B cell (primary cell): ENCODE measurements at regions of chr5 and their contacts with region 1.

Region 1: DNA sequence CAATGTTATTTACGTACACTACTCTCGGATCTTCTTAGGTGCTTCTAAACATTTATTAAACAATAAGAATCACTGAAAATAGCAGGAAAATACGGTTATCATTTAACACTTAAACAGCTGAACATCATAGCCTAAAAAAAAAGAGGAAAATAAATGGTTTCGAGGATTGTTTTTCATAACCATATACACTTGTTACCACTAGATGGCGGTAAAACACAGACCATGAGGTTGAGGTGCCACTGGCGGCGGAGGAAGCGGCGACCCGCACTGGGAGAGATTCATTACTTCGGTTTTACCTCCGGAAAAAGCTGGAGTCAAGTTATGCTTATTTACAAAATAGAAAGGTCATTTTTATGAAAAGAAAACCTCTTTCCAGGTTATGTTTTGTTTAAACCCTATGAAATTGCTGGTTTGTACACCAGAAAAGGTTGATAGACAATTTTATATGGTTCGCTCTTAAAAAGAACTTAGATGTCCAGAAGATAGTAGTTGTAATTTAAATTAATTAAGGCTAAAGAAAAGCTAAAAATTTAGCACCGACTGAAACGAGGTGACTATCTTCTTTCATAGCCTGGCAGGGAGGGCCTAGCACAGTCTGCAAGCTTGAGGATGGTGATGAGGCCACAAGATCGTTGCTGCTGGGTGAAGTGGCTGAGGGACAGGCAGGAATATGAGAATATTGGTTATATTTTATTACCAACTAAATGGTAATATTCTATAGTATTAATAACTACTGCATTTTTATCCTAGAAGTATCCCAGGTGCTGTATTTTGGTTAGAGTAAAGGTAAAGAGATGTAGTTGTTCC is 605.7 kb downstream of the RAB3C start:
- DNase-seq: peak; percentile 73
- ATAC-seq: peak; percentile 62
- H3K4me3 ChIP-seq: no peak overlapping the region
- H3K4me3 Mint-ChIP-seq: peak overlapping the region; percentile 5
- H3K27ac ChIP-seq: no peak overlapping the region
- H3K27ac Mint-ChIP-seq: no peak overlapping the region
- H3K4me1 ChIP-seq: peaks cover 4 to 6% of the 10 kb centered on the region in 2 donors
- H3K4me1 Mint-ChIP-seq: peaks cover 3% of the 10 kb centered on the region
- H3K27me3 ChIP-seq: no peaks in the 10 kb centered on the region
- H3K27me3 Mint-ChIP-seq: peaks cover 10% of the 10 kb centered on the region
- CTCF ChIP-seq: peak; percentile 93

Region 2: GRCh38 chr5:59174248-59174844 is 14.3 kb before region 1 on chr5:
- CTCF ChIA-PET with region 1: interaction called, 22 read pairs
- POLR2A ChIA-PET with region 1: no interaction called
- intact Hi-C with region 1: no loop called
- DNase-seq: peak; percentile 33
- ATAC-seq: peak; percentile 56
- H3K4me3 ChIP-seq: no peak overlapping the region
- H3K4me3 Mint-ChIP-seq: no peak overlapping the region
- H3K27ac ChIP-seq: no peak overlapping the region
- H3K27ac Mint-ChIP-seq: no peak overlapping the region
- H3K4me1 ChIP-seq: peaks cover 0 to 5% of the 10 kb centered on the region in 2 donors
- H3K4me1 Mint-ChIP-seq: peaks cover 3% of the 10 kb centered on the region
- H3K27me3 ChIP-seq: no peaks in the 10 kb centered on the region
- H3K27me3 Mint-ChIP-seq: no peaks in the 10 kb centered on the region
- CTCF ChIP-seq: peak; percentile 62

Region 3: DNA sequence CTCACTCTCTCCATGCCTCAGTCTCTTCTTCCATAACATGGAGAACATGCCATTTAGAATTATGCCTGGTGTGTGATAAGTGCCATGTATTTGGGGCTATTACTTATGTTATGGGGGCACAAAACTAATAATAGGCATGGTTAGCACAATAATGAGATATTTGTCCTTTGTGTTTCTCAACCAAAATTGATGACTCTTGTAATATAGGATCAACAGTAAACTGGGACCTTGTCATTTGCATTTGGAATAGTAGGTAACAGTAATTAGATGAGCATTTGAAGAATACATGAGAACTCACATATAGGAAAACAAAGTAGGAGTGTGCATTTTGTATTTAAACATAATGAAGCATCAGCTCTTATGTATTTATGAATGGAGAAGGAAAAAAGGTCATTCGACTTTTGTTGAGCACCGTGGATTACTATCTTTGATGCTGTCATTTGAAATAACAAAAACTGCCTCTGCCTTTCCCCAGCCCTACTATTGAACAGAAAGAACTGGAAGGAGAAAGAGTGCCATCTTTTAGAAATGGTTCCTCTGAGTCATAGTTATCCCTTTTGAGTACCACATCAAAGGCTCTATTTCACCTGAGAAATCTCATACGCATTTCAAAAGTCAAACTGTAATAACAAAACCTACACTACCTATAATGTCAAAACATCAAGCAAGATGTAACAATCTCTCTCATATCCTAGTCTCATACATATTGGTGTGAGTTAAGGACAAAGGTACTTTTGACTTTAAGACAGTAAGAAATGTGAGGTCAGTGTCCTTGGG is 49.7 kb after region 1 on chr5:
- CTCF ChIA-PET with region 1: no interaction called
- POLR2A ChIA-PET with region 1: no interaction called
- intact Hi-C with region 1: no loop called
- DNase-seq: no peak
- ATAC-seq: no peak
- H3K4me3 ChIP-seq: no peak overlapping the region
- H3K4me3 Mint-ChIP-seq: no peak overlapping the region
- H3K27ac ChIP-seq: no peak overlapping the region
- H3K27ac Mint-ChIP-seq: no peak overlapping the region
- H3K4me1 ChIP-seq: no peaks in the 10 kb centered on the region
- H3K4me1 Mint-ChIP-seq: no peaks in the 10 kb centered on the region
- H3K27me3 ChIP-seq: no peaks in the 10 kb centered on the region
- H3K27me3 Mint-ChIP-seq: no peaks in the 10 kb centered on the region
- CTCF ChIP-seq: no peak

Region 4: GRCh38 chr5:59367791-59368394 is 179.3 kb after region 1 on chr5:
- CTCF ChIA-PET with region 1: interaction called, 94 read pairs
- POLR2A ChIA-PET with region 1: no interaction called
- intact Hi-C with region 1: loop called (anchors 1 kb)
- DNase-seq: peak; percentile 34
- ATAC-seq: peak; percentile 36
- H3K4me3 ChIP-seq: no peak overlapping the region
- H3K4me3 Mint-ChIP-seq: no peak overlapping the region
- H3K27ac ChIP-seq: no peak overlapping the region
- H3K27ac Mint-ChIP-seq: no peak overlapping the region
- H3K4me1 ChIP-seq: no peaks in the 10 kb centered on the region
- H3K4me1 Mint-ChIP-seq: no peaks in the 10 kb centered on the region
- H3K27me3 ChIP-seq: no peaks in the 10 kb centered on the region
- H3K27me3 Mint-ChIP-seq: peaks cover 3% of the 10 kb centered on the region
- CTCF ChIP-seq: peak; percentile 59

Region 5: DNA sequence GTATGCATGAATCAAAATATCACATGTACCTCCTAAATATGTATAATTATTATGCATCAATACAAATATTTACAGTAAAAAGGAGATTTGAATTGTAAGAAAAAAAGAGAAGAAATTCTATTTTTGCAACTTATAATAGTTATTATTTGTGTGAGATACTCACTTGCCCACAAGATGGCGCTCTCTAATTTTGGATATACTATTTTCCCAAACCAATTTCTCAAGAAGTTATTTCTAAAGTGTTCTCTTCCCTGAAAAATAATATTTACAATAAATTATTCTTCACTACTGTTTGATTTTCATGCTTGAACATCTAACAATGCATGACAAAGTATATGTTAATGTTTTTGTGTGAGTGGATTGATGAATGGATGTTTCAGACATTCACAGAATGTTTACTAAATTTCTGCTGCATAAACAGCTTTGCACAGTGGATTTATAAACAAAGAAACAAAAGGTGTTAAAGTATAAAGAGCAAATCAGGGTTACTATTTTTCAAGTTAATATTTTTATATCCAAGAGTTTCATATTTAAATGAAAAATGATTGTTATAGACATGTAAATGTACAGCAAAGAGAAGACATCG is 201.5 kb after region 1 on chr5:
- CTCF ChIA-PET with region 1: interaction called, 20 read pairs
- POLR2A ChIA-PET with region 1: no interaction called
- intact Hi-C with region 1: no loop called
- DNase-seq: peak; percentile 53
- ATAC-seq: no peak
- H3K4me3 ChIP-seq: no peak overlapping the region
- H3K4me3 Mint-ChIP-seq: no peak overlapping the region
- H3K27ac ChIP-seq: no peak overlapping the region
- H3K27ac Mint-ChIP-seq: no peak overlapping the region
- H3K4me1 ChIP-seq: no peaks in the 10 kb centered on the region
- H3K4me1 Mint-ChIP-seq: peaks cover 21% of the 10 kb centered on the region
- H3K27me3 ChIP-seq: no peaks in the 10 kb centered on the region
- H3K27me3 Mint-ChIP-seq: no peaks in the 10 kb centered on the region
- CTCF ChIP-seq: peak; percentile 95

Region 6: DNA sequence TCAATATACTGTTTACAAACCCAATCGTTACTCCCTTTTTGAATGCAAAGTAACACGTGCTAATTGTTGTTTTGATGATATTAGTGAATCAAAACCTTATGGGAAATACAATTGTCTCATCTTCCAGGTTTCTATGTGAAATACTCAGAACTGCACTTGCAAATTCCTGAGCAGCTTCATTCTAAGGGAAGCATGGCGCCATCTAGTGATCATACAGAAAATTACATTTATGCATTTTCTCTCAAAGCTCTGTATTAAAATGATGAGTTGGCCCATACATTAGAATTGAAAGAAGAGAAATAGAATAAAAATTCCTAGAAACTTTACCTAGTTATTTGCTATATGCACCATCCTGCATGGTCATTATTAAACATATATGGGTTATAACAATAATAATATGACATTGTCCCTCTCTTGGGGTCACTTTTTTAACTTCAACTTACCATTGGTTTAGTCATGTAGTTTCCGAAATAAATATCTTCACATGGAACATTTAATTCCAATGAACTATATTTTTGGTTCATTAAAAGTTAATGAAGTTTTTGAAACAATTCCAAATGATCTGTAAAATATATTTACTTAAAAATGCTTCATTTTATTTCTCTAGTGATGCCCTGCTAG is 484.9 kb after region 1 on chr5:
- CTCF ChIA-PET with region 1: interaction called, 16 read pairs
- POLR2A ChIA-PET with region 1: no interaction called
- intact Hi-C with region 1: loop called (anchors 1 kb)
- DNase-seq: peak; percentile 70
- ATAC-seq: no peak
- H3K4me3 ChIP-seq: no peak overlapping the region
- H3K4me3 Mint-ChIP-seq: no peak overlapping the region
- H3K27ac ChIP-seq: no peak overlapping the region
- H3K27ac Mint-ChIP-seq: no peak overlapping the region
- H3K4me1 ChIP-seq: peaks cover 0 to 4% of the 10 kb centered on the region in 2 donors
- H3K4me1 Mint-ChIP-seq: peaks cover 14% of the 10 kb centered on the region
- H3K27me3 ChIP-seq: no peaks in the 10 kb centered on the region
- H3K27me3 Mint-ChIP-seq: no peaks in the 10 kb centered on the region
- CTCF ChIP-seq: peak; percentile 95